Sciatic nerve (tissue), 2 donors: ENCODE measurements at regions of chr15 and their contacts with region 1.

Region 1: GRCh38 chr15:83446904-83447709 is at the start of gene SH3GL3:
- DNase-seq: peak; percentile 84
- ATAC-seq: peak; percentile 97
- total RNA-seq, gene SH3GL3: 0.67 TPM

Region 2: GRCh38 chr15:83559310-83559966 is 112.3 kb after region 1 on chr15:
- intact Hi-C with region 1: loop called (anchors 10 kb)
- DNase-seq: no peak
- ATAC-seq: peak; percentile 82